Head of caudate nucleus (tissue), 42 donors: ENCODE measurements at regions of chr1 and their contacts with region 1.

Region 1: DNA sequence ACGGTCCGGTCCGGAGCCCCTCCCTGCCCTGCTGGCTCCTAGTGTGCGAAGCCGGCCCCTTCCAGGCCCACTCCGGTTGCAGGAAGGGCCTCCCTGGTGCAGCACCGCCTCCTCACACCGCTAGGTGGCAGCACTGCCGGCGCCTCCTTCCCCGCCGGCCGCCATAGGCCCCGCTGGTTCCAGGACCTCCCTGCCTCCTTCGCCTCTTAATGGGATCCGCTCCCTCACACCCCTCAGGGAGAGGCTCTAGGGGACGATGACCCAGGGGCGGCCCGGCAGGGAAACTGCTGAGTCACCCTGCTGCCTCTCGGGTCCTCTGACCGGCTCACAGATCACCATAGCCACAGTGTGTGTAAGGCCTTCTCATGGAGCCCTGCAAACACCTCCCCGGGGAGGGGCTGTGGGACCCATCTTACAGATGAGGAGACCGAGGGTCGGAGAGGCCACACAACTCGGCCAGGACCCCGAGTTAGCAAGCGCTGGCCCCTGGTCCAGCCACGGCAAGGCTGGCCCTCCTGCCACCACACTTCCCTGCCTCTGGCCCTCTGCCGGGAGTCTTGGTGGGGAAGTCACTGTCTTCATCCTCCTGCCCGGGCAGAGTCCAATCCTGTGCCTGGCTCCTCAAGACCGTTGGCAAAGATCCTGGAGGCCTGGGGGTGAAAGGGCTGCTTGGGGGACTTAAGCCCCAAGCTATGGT is 1.6 kb upstream of the AJAP1 start:
- DNase-seq: peak in 41 of 42 donors; percentile 46 to 93 (median 81)

Region 2: DNA sequence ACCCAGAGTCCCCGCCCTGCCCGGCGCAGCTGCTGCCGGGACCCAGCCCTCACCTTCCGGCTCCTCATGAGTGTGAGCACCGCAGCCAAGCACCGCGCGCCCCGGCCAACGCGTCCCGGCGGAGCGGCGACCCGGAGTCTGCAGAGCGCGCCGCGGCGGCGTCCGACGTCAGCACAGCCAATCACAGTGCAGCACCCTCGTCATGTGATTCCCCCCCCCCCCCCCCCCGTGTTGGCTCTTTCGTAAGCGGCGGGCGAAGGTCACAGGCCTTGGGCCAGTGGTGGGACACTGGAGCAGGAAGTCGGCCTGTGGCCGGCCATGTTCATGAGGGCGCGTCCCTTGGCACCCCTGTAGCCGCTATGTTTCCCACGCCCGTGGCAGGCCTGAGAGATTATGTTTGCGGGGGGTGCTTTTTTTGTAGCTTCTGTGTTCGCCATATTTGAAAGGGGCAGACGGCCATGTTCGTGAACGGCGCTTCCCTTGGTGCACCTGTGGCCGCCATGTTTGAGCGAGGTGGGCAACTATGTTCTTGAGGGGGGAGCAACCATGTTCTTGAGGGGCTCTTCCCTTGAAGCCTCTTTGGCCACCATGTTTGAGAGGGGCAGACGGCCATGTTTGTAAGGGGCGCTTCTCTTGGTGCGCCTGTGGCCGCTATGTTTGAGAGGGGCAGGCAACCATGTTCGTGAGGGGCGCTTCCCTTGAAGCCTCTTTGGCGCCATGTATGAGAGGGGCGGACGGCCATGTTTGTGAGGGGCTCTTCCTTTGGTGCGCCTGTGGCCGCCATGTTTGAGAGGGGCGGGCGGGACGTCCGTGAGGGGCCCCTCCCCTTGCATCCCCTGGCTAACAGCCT is 752.4 kb before region 1 on chr1 and contains the start of gene C1orf174:
- intact Hi-C with region 1: loop called (anchors 5 kb)
- DNase-seq: peak; percentile 87 to 99 (median 96)

Region 3: DNA sequence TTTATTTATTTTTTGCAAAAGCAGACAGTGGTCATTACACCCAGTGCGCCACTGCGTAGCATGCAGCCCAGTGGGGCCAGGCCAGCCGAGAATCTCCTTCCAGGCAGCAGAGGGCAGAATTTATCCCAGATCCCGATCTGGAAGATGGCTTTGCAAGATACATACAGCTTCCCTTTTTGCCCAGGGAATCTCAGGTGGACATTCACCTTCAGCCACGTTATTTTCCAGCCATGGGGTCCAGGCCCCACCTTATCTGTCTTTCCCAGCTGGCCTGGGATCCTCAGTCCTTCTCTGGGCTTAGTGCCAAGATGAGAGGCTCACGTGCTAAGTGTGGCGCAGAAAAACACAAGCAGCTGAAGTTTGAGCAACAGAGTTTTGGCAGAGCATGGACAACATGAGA is 125.3 kb after region 1 on chr1:
- intact Hi-C with region 1: loop called (anchors 10 kb)
- DNase-seq: peak in 41 of 42 donors; percentile 35 to 85 (median 60)

Region 4: DNA sequence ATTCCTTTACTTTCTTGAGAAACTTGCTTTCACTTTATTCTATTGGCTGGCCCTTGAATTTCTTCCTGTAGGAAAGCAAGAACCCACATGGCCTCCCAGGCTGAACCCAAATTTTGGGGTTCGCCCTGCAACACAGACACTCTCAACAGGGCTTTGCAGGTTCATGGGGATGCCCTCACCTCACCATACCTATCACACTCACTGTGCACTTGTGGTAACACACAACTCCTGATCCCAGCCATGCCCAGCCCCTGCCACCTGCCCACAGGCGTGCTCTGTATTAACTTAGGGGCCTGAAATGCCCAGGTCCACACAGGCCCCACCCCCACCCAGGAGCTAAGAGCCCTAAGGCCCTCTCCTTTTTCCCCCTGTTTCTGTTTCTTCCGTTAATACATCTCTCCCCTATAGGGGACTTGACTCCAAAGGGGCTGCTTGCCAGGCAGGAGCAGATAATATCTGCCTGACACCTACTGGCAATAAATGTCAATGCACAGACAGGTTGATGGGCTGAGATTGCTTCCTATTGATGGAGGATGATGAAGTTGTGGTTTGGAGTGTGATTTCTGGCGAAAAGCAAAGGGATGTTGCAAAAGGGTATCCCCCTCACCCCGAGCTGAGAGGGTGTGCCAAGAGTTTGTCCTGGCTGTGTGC is 173.1 kb after region 1 on chr1:
- intact Hi-C with region 1: loop called (anchors 2 kb)
- DNase-seq: peak in 35 of 42 donors; percentile 12 to 80 (median 55)